ENCODE measurements at regions of chr1 and their contacts with region 1.

Region 1: GRCh38 chr1:28248283-28249012 is 10.9 kb upstream of the SESN2 start:
- DNase-seq: peak; percentile 80
- ATAC-seq: peak; percentile 45
- H3K4me3 ChIP-seq: peak overlapping the region; percentile 59
- H3K27ac ChIP-seq: peak overlapping the region; percentile 55
- H3K4me1 ChIP-seq: peaks cover 26% of the 10 kb centered on the region
- H3K27me3 ChIP-seq: no peaks in the 10 kb centered on the region
- CTCF ChIP-seq: peak; percentile 95

Region 2: DNA sequence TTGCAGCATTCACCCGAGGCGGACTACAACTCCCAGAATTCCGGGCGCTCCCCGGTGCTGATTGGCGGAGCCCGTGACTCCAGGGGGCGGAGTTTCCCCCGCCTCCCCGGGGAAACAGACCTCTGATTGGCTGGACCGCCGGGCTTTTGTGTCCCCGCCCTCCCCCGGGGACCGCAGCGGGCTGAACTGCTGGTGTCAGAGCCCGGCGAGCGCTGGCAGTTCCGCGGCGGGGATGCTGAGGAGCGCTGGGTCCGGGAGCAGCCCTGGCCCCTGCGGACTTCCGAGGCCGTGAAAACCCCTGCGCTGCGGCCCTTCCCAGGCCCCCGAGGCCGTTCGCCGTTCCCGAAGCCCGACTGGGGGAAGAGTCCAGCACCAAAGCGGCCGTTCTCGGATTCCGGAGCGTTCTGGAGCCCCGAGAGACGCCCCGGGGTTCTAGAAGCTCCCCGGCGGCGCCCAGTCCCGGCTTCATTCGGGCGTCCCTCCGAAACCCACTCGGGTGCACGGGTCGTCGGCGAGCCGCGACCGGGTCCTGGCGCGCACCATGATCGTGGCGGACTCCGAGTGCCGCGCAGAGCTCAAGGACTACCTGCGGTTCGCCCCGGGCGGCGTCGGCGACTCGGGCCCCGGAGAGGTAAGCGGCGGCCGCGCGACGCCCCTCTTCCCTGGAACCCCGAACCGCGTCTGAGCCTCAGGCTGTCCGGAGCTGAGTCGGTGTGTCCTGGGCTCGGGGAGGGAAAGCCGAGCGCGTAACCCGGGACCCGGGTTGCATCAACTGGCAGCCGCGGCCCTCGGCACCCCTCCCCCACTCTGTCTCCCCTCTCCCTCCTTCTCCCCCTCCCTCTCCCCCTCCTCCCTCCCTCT is 11.1 kb after region 1 on chr1 and contains the start of gene SESN2:
- CTCF ChIA-PET with region 1: interaction called, 8 read pairs
- POLR2A ChIA-PET with region 1: interaction called, 17 read pairs
- intact Hi-C with region 1: loop called (anchors 1 kb)
- DNase-seq: peak; percentile 99
- ATAC-seq: peak; percentile 87
- H3K4me3 ChIP-seq: peak within 1 kb of the TSS; percentile 100
- H3K27ac ChIP-seq: peak within 1 kb of the TSS; percentile 80
- H3K4me1 ChIP-seq: peaks cover 17% of the 10 kb centered on the region
- H3K27me3 ChIP-seq: no peaks in the 10 kb centered on the region
- CTCF ChIP-seq: no peak
- total RNA-seq, gene SESN2: 6.9 and 10.7 TPM in 2 replicates

Region 3: GRCh38 chr1:28354121-28354520 is 105.7 kb after region 1 on chr1:
- CTCF ChIA-PET with region 1: interaction called, 5 read pairs
- POLR2A ChIA-PET with region 1: no interaction called
- intact Hi-C with region 1: loop called (anchors 5 kb)
- DNase-seq: peak; percentile 81
- ATAC-seq: peak; percentile 49; the same call in 1 of the 2 replicates
- H3K4me3 ChIP-seq: no peak overlapping the region
- H3K27ac ChIP-seq: peak overlapping the region; percentile 5; the same call in 1 of the 2 replicates
- H3K4me1 ChIP-seq: peaks cover 32% of the 10 kb centered on the region
- H3K27me3 ChIP-seq: no peaks in the 10 kb centered on the region
- CTCF ChIP-seq: no peak

Region 4: DNA sequence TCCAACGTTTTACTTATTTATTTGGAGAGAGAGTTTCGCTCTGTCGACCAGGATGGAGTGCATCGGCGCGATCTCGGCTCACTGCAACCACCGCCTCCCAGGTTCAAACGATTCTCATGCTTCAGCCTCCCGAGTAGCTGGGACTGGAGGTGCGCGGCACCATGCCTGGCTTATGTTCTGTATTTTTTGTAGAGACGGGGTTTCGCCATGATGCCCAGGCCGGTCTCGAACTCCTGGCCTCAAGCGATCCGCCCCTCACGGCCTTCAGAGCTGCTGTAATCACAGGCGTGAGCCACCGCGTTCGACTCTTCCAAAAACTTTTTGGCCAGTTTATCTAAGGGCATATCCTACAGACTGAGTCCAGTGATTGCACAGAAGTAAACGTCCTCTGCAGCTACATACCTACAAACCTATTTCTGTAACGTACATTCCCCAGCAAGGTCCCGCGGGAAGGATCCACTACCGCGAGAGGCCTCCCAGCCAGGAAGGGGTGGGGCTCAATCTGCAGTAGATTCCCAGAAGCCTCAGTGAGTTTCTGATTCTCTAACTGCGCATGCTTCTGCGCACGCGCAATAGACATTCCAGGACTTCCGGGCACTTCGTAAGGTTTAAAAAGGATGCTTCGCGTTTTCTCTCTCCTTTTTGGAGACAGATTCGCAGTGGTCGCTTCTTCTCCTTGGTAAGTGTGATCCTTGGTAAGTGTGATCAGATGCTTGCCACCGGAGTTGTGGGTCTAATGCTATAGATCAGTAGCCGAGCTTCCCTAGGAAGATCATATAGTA is 257.1 kb after region 1 on chr1 and contains the start of gene RCC1:
- CTCF ChIA-PET with region 1: no interaction called
- POLR2A ChIA-PET with region 1: interaction called, 13 read pairs
- intact Hi-C with region 1: loop called (anchors 5 kb)
- DNase-seq: peak; percentile 99
- ATAC-seq: peak; percentile 73
- H3K4me3 ChIP-seq: peak within 1 kb of the TSS; percentile 92
- H3K27ac ChIP-seq: peak within 1 kb of the TSS; percentile 75
- H3K4me1 ChIP-seq: peaks cover 36% of the 10 kb centered on the region
- H3K27me3 ChIP-seq: no peaks in the 10 kb centered on the region
- CTCF ChIP-seq: no peak
- total RNA-seq, gene RCC1: 96.5 and 119 TPM in 2 replicates

Region 5: DNA sequence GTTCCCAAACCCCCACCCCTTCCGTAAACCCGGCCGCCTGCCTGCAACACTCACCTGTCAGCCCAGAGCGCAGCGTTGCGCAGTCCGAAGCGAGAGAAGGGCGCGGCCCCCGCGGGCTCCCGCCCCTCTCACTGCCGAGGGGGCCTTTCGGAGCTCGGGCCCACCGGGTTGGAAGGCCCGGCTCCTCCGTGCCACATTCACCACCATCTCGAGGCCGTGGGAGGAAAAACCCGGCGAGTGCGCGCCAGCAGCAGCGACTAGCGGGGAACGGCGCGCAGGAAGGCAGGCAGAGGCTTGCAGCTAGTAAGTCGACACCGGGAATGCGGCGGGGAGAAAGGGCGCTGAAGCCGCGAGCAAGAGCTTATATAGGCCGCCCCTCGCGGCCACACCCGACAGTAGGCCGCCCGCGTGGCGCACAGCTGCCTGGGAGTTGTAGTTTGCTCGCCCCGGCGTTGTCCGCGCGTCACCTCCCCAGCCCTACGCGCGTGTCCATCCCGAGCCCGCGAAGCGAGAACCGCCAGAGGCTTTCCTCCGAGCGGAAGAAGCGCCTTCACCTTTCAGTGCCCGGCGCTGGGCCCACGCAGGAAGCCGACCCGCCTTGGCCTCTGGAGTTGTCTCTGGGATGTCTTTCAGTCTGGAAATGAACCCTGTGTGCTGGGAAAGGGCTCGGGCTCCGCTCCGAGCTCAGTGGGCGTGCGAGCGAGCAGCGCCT is 333.2 kb after region 1 on chr1:
- CTCF ChIA-PET with region 1: no interaction called
- POLR2A ChIA-PET with region 1: interaction called, 5 read pairs
- intact Hi-C with region 1: loop called (anchors 5 kb)
- DNase-seq: peak; percentile 95
- ATAC-seq: peak; percentile 94
- H3K4me3 ChIP-seq: peak overlapping the region; percentile 99
- H3K27ac ChIP-seq: peak overlapping the region; percentile 66
- H3K4me1 ChIP-seq: peaks cover 15% of the 10 kb centered on the region
- H3K27me3 ChIP-seq: no peaks in the 10 kb centered on the region
- CTCF ChIP-seq: 0 out of 2 replicates have a peak, but pooled peaks have one; percentile 7

Region 6: DNA sequence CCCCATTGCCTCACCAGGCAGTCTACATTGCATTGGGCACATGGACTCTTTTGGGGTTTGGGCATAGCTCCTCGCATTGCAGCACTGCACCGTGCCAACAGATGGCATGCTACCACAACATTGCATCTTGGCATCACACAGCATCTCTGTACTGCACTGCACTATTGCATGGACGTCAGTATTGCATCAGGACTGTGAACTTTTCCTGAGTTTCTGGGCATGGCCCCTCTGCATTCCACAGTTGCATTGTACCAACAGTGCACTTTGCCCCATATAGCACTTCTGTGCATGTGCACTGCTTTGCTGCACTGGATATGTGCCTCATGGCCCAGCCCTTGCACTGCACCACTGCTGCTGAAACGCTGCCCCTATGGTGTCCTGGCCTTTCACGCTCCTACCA is 997.4 kb after region 1 on chr1:
- CTCF ChIA-PET with region 1: no interaction called
- POLR2A ChIA-PET with region 1: no interaction called
- intact Hi-C with region 1: no loop called
- DNase-seq: peak; percentile 75
- ATAC-seq: peak; percentile 95
- H3K4me3 ChIP-seq: no peak overlapping the region
- H3K27ac ChIP-seq: no peak overlapping the region
- H3K4me1 ChIP-seq: peaks cover 16% of the 10 kb centered on the region
- H3K27me3 ChIP-seq: no peaks in the 10 kb centered on the region
- CTCF ChIP-seq: peak; percentile 79

Measured in PC-3 (cell line).